ENCODE measurements at regions of chr11 and their contacts with region 1.

Region 1: GRCh38 chr11:66545701-66546367 is at the start of gene ZDHHC24:
- DNase-seq: peak; percentile 86
- H3K4me3 Mint-ChIP-seq: peak within 1 kb of the TSS; percentile 88
- H3K27ac Mint-ChIP-seq: peak within 1 kb of the TSS; percentile 47
- H3K4me1 Mint-ChIP-seq: peaks cover 28% of the 10 kb centered on the region
- H3K27me3 Mint-ChIP-seq: peaks cover 10% of the 10 kb centered on the region
- total RNA-seq, gene ZDHHC24: 14.6 and 15.6 TPM in 2 replicates

Region 2: DNA sequence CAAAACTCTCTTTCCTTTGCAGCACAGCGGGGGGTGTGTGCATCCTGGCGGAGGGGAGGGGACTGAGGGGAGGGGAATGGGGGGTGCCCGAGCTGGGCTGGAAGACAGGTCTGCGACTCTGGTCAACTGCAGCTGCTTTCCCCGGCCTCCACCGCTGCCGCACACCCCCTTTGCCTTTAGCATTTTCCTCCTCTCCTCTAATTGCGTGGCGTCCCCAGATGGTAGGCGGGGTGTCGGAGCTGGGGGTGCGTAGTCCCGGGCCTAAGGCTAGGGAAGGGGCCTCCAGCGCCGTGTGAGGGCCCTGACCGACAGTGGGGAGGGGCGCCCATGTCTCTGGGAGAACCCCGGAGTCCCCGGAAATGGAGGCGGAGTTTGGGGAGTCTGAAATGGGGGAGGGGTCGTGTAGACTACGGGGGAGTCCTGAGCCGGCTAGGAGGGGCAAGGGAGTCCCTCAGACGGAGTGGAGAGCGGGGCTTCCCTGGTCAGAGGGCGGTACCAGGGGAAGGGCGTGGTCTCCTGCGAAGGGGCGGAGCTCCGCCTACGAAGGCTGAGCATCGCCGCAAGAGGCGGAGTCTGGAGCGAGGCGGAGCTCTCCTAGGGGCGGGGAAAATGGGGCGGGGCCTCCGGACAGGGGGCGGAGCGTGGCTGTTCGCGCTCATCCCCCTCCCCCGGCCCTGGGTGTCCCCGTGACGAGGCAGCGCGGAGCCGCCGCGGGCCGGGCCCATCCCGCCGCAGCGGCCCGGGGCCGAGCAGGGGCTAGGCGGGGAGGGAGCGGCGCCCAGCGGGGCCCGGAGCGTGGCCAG is 79.4 kb before region 1 on chr11 and contains the start of gene PELI3:
- intact Hi-C with region 1: loop called (anchors 1 kb)
- DNase-seq: peak; percentile 86
- H3K4me3 Mint-ChIP-seq: peak within 1 kb of the TSS; percentile 94
- H3K27ac Mint-ChIP-seq: peak within 1 kb of the TSS; percentile 88
- H3K4me1 Mint-ChIP-seq: peaks cover 28% of the 10 kb centered on the region
- H3K27me3 Mint-ChIP-seq: no peaks in the 10 kb centered on the region
- total RNA-seq, gene PELI3: 15.3 and 15.8 TPM in 2 replicates

Region 3: GRCh38 chr11:66510271-66510989 is 35.4 kb before region 1 on chr11 and contains the start of gene BBS1:
- intact Hi-C with region 1: loop called (anchors 1 kb)
- DNase-seq: peak; percentile 77
- H3K4me3 Mint-ChIP-seq: peak within 1 kb of the TSS; percentile 90
- H3K27ac Mint-ChIP-seq: peak within 1 kb of the TSS; percentile 61
- H3K4me1 Mint-ChIP-seq: peaks cover 10% of the 10 kb centered on the region
- H3K27me3 Mint-ChIP-seq: no peaks in the 10 kb centered on the region
- total RNA-seq, gene BBS1: 18.0 and 18.1 TPM in 2 replicates

Region 4: DNA sequence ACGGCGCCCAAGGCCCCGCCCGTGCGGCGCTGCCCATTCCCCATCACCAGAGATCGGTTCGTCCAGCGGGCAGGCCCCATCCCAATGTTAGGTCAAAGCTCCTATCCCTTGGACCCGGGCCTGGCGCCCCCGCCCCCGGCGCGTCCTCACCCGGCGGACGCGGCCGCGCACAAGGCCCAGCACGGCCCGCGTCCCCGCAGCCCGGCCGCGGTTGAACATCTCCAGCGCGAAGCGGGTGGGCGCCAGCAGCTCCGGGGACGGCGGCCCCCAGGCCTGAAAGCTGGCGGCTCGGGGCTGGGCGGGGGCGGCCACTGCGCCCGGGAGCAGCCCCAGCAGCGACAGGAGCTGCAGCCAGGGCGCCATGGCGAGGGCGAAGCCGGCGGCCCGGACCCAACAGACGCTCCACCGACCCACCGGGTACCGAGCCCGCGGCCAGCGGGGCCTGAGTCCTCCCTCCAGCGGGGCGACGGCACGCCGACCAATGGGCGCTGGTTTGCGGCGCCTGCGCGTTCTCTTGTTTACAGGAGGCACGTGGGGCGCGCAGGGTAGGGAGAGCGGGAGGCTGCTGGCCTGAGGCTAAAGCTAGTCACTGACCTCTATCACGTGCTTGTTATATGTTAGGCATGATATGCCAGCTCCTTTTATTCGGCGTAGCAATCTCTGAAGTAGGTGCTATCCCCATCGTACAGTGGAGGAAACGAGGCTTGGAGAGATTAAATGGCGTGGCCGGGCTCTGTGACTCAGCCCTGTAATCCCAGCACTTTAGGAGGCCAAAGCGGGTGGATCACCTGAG is 22.5 kb after region 1 on chr11 and contains the start of gene CTSF:
- intact Hi-C with region 1: loop called (anchors 1 kb)
- DNase-seq: peak; percentile 63
- H3K4me3 Mint-ChIP-seq: peak within 1 kb of the TSS; percentile 73
- H3K27ac Mint-ChIP-seq: no peak within 1 kb of the TSS
- H3K4me1 Mint-ChIP-seq: no peaks in the 10 kb centered on the region
- H3K27me3 Mint-ChIP-seq: peaks cover 29% of the 10 kb centered on the region
- total RNA-seq, gene CTSF: 0.71 and 0.73 TPM in 2 replicates

Region 5: GRCh38 chr11:66600631-66601233 is 54.9 kb after region 1 on chr11:
- intact Hi-C with region 1: no loop called
- DNase-seq: no peak
- H3K4me3 Mint-ChIP-seq: no peak overlapping the region
- H3K27ac Mint-ChIP-seq: no peak overlapping the region
- H3K4me1 Mint-ChIP-seq: peaks cover under 1% of the 10 kb centered on the region
- H3K27me3 Mint-ChIP-seq: no peaks in the 10 kb centered on the region

Region 6: GRCh38 chr11:66616379-66617154 is 70.7 kb after region 1 on chr11 and contains the start of gene RBM14:
- intact Hi-C with region 1: loop called (anchors 1 kb)
- DNase-seq: peak; percentile 99
- H3K4me3 Mint-ChIP-seq: peak within 1 kb of the TSS; percentile 97
- H3K27ac Mint-ChIP-seq: peak within 1 kb of the TSS; percentile 98
- H3K4me1 Mint-ChIP-seq: peaks cover 36% of the 10 kb centered on the region
- H3K27me3 Mint-ChIP-seq: no peaks in the 10 kb centered on the region
- total RNA-seq, gene RBM14: 198 and 200 TPM in 2 replicates

Region 7: GRCh38 chr11:66727282-66727882 is 181.5 kb after region 1 on chr11:
- intact Hi-C with region 1: no loop called
- DNase-seq: no peak
- H3K4me3 Mint-ChIP-seq: peak overlapping the region; percentile 45
- H3K27ac Mint-ChIP-seq: peak overlapping the region; percentile 20
- H3K4me1 Mint-ChIP-seq: peaks cover 12% of the 10 kb centered on the region
- H3K27me3 Mint-ChIP-seq: peaks cover 55% of the 10 kb centered on the region

Region 8: DNA sequence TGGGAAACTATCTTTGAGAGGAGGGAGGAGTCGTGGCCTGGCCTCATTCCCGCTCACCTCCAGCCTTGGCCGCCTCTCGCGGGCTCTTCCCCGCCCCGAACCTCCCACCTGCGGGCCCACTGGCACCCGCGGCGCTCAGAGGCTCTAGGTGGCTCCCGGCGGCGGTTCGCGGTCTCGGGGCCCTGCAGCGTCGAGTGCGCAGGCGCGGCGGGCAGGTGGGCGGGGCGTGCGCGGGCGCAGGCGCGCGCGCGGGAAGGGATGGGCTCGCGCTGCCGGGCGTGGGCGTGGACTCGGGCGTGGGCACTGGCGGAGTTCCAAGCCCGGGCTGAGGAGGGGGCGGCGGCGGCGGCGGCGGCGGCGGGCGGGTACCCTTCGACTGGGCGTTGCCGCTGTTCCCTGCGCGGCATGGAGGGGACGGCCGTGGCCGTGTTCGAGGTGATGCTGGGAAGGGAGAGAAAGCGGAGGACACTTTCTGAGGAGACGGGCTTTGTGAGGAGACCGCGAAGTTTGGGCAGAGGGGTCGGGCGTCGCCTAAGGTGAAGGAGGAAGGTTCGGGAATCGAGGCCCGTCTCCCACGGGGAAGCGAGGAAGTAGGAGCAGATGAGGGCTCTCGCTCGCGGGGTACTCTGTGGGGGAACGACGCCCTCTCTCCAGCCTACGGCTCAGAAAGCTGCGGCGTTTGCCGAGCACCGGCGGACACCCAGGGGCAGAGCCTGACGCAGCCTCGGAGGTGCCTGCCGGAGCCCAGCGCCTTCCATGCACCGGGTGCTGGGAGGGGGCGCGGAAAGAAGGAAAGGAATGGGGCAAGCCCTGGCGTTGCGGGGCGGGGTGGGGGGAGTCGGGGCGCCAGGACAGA is 198.9 kb after region 1 on chr11:
- intact Hi-C with region 1: loop called (anchors 1 kb)
- DNase-seq: peak; percentile 91
- H3K4me3 Mint-ChIP-seq: peak overlapping the region; percentile 90
- H3K27ac Mint-ChIP-seq: peak overlapping the region; percentile 80
- H3K4me1 Mint-ChIP-seq: no peaks in the 10 kb centered on the region
- H3K27me3 Mint-ChIP-seq: peaks cover 2% of the 10 kb centered on the region